MCF 10A (cell line): ENCODE measurements at regions of chr10 and their contacts with region 1.

Region 1: GRCh38 chr10:60314069-60314940 is 75.4 kb downstream of the ANK3 start:
- DNase-seq: peak; percentile 75
- H3K4me3 Mint-ChIP-seq: no peak overlapping the region
- H3K27ac Mint-ChIP-seq: peak overlapping the region; percentile 61
- H3K4me1 Mint-ChIP-seq: peaks cover 25% of the 10 kb centered on the region
- H3K27me3 Mint-ChIP-seq: no peaks in the 10 kb centered on the region
- CTCF ChIP-seq: no peak

Region 2: GRCh38 chr10:60237977-60238758 is 76.1 kb before region 1 on chr10:
- CTCF ChIA-PET with region 1: no interaction called
- POLR2A ChIA-PET with region 1: no interaction called
- intact Hi-C with region 1: loop called (anchors 10 kb)
- DNase-seq: peak; percentile 52
- H3K4me3 Mint-ChIP-seq: no peak overlapping the region
- H3K27ac Mint-ChIP-seq: no peak overlapping the region
- H3K4me1 Mint-ChIP-seq: no peaks in the 10 kb centered on the region
- H3K27me3 Mint-ChIP-seq: no peaks in the 10 kb centered on the region
- CTCF ChIP-seq: no peak

Region 3: DNA sequence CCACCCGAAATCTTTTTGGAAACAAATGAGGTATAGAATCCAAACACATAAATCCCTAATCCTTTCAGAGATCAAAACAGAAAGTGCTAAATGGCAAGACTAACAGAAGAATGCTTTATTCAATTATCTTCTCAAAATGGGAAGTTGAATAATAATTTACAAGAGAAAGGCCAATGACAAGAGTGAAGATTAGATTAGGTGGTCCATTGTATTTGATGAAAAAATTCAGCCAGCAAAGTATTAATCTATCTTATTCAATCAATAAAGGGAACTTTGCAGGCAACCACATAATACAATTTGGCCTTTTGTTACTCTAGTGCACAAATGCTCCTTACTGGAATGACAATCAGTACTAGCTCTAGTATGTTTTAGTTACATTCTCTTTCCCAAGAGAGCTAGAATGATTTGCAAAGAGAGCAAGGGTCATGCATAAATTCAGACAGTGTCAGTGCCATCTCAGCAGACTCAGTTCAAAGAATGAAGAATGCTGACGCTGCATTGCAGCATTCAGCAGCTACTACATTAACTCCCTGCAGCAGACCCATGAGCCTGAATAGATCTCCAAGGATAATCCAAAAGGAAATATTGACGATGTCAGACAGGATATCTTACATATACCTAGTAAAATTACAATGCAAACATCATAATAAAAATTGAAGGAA is 56.4 kb before region 1 on chr10:
- CTCF ChIA-PET with region 1: no interaction called
- POLR2A ChIA-PET with region 1: no interaction called
- intact Hi-C with region 1: no loop called
- DNase-seq: no peak
- H3K4me3 Mint-ChIP-seq: no peak overlapping the region
- H3K27ac Mint-ChIP-seq: no peak overlapping the region
- H3K4me1 Mint-ChIP-seq: no peaks in the 10 kb centered on the region
- H3K27me3 Mint-ChIP-seq: no peaks in the 10 kb centered on the region
- CTCF ChIP-seq: no peak